ENCODE measurements at regions of chr1 and their contacts with region 1.

Region 1: GRCh38 chr1:27284425-27285273 is 37.3 kb upstream of the TMEM222 start:
- DNase-seq: peak; percentile 75
- H3K4me3 Mint-ChIP-seq: no peak overlapping the region
- H3K27ac Mint-ChIP-seq: no peak overlapping the region
- H3K4me1 Mint-ChIP-seq: no peaks in the 10 kb centered on the region
- H3K27me3 Mint-ChIP-seq: no peaks in the 10 kb centered on the region

Region 2: GRCh38 chr1:27044613-27045151 is 240.0 kb before region 1 on chr1:
- intact Hi-C with region 1: loop called (anchors 1 kb)
- DNase-seq: peak; percentile 77
- H3K4me3 Mint-ChIP-seq: peak overlapping the region; percentile 62
- H3K27ac Mint-ChIP-seq: no peak overlapping the region
- H3K4me1 Mint-ChIP-seq: peaks cover 16% of the 10 kb centered on the region
- H3K27me3 Mint-ChIP-seq: no peaks in the 10 kb centered on the region

Region 3: GRCh38 chr1:27102707-27103491 is 181.8 kb before region 1 on chr1:
- intact Hi-C with region 1: loop called (anchors 1 kb)
- DNase-seq: peak; percentile 70
- H3K4me3 Mint-ChIP-seq: no peak overlapping the region
- H3K27ac Mint-ChIP-seq: no peak overlapping the region
- H3K4me1 Mint-ChIP-seq: peaks cover 7% of the 10 kb centered on the region
- H3K27me3 Mint-ChIP-seq: no peaks in the 10 kb centered on the region

Region 4: DNA sequence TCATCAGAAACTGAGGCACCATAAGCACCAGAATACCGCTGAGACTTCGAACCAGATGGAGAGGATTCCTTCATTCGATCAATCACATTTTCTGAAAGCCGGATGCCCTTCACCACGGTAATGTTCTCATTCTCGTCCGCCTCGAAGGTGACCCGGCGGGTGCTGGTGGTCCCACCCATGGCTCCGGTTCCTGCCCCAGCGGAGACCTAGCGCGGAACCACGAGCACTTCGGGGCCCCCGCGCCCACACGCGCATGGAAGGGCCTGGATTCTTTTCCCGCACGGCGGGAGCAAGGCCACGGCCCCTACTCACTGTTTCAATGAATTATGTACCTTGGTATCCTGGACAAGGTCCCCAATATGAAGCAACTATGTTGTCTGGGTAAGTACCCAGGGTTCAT is 83.4 kb before region 1 on chr1:
- intact Hi-C with region 1: loop called (anchors 1 kb)
- DNase-seq: no peak
- H3K4me3 Mint-ChIP-seq: no peak overlapping the region
- H3K27ac Mint-ChIP-seq: no peak overlapping the region
- H3K4me1 Mint-ChIP-seq: peaks cover 2% of the 10 kb centered on the region
- H3K27me3 Mint-ChIP-seq: peaks cover 3% of the 10 kb centered on the region

Region 5: GRCh38 chr1:27318596-27318995 is 33.9 kb after region 1 on chr1:
- intact Hi-C with region 1: no loop called
- DNase-seq: no peak
- H3K4me3 Mint-ChIP-seq: no peak overlapping the region
- H3K27ac Mint-ChIP-seq: no peak overlapping the region
- H3K4me1 Mint-ChIP-seq: peaks cover 9% of the 10 kb centered on the region
- H3K27me3 Mint-ChIP-seq: peaks cover 7% of the 10 kb centered on the region

Region 6: DNA sequence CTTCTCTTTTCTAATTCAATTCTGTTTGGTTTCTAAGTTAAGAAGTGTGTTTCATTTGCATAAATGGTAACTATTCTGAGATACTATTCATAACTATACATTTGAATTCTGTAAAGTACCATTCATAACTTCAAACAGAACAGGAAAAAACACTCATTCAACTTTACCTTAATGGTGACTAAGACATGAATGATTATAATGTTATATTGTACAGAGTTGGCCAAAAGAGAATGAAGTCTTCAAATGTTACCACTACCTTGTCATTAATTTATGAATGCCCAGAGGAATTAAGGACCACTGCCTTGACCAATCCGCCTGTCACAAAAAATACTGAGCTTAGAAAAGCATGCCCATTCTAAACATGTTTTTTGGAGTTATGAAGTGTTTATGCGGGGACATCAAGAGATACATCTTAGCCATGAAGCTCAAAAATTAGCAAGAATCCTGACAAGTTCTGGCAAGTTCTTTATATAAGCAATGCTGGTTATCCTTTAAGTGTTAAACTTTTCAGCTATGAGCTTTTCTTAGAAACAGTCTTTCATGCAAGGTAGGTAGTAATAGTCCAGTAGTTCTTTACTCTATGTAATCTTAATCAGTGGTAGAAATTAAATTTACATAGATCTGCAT is 197.5 kb after region 1 on chr1:
- intact Hi-C with region 1: no loop called
- DNase-seq: no peak
- H3K4me3 Mint-ChIP-seq: no peak overlapping the region
- H3K27ac Mint-ChIP-seq: peak overlapping the region; percentile 75
- H3K4me1 Mint-ChIP-seq: peaks cover 26% of the 10 kb centered on the region
- H3K27me3 Mint-ChIP-seq: no peaks in the 10 kb centered on the region

Measured in activated T-helper 2 cell treated with anti-CD3 and anti-CD28 coated beads, Interferon-gamma antibody, Interleukin-2, Interleukin-4, amounts not matched to agents 10 μg/mL and 5 μg/mL and 100 μg/mL, durations not matched to agents 14 hours and 24 hours and 36 hours (primary cell).